MCF 10A (cell line): ENCODE measurements at regions of chr20 and their contacts with region 1.

Region 1: GRCh38 chr20:5749952-5750779 is at the start of gene SHLD1:
- DNase-seq: peak; percentile 85
- H3K4me3 Mint-ChIP-seq: peak within 1 kb of the TSS; percentile 78
- H3K27ac Mint-ChIP-seq: peak within 1 kb of the TSS; percentile 95
- H3K4me1 Mint-ChIP-seq: peaks cover 3% of the 10 kb centered on the region
- H3K27me3 Mint-ChIP-seq: no peaks in the 10 kb centered on the region
- CTCF ChIP-seq: no peak
- total RNA-seq, gene SHLD1: 2.3 and 3.3 TPM in 2 replicates

Region 2: DNA sequence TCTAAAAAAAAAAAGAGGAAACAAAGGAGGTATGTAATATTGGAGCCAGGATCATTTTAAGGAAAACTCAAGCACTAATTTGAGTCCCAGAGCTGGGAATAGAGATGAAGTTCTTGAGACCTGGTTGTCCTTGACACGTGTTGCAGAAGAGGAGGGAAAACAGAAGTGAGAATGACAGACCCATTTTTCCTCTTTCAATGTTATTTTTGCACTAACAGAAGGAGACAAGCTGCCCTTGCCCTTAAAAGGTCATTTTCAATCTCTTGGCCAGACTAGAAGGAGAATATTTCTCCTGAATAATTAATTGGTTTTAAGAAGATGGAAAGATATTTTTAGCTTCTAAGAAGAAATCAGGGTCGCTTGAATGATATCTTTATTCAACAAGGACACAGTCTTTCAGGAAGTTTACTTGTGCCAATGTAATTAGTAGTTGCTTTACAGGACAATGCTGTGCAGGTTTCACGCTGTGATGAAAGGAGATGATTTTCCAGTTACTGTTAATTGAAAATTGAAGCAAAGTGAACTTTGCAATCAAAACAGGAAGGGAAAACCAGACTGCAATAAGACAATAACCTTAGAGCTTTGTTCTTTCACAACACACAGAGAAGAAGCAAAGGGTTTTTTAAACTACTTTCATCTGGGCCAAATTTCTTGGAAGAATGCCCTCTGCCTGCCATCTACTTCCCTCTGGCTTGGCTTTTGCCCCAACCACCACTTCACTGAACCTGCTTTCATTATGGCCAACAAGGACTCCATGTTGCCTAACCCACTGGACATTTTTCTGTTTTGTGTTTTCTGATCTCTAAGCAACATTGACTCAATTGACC is 107.8 kb before region 1 on chr20:
- CTCF ChIA-PET with region 1: no interaction called
- POLR2A ChIA-PET with region 1: interaction called, 13 read pairs
- intact Hi-C with region 1: no loop called
- DNase-seq: peak; percentile 78
- H3K4me3 Mint-ChIP-seq: no peak overlapping the region
- H3K27ac Mint-ChIP-seq: peak overlapping the region; percentile 64
- H3K4me1 Mint-ChIP-seq: peaks cover 12% of the 10 kb centered on the region
- H3K27me3 Mint-ChIP-seq: no peaks in the 10 kb centered on the region
- CTCF ChIP-seq: no peak

Region 3: GRCh38 chr20:5766085-5766764 is 16.1 kb after region 1 on chr20:
- CTCF ChIA-PET with region 1: interaction called, 3 read pairs
- POLR2A ChIA-PET with region 1: interaction called, 21 read pairs
- intact Hi-C with region 1: no loop called
- DNase-seq: no peak
- H3K4me3 Mint-ChIP-seq: no peak overlapping the region
- H3K27ac Mint-ChIP-seq: no peak overlapping the region
- H3K4me1 Mint-ChIP-seq: peaks cover 13% of the 10 kb centered on the region
- H3K27me3 Mint-ChIP-seq: no peaks in the 10 kb centered on the region
- CTCF ChIP-seq: no peak